GM23248 (cell line): ENCODE measurements at regions of chr10 and their contacts with region 1.

Region 1: GRCh38 chr10:95601116-95601719 is 40.0 kb upstream of the SORBS1 start:
- DNase-seq: peak; percentile 91
- H3K4me3 ChIP-seq: no peak overlapping the region
- H3K27ac ChIP-seq: no peak overlapping the region
- H3K4me1 ChIP-seq: no peaks in the 10 kb centered on the region
- H3K27me3 ChIP-seq: peaks cover 14% of the 10 kb centered on the region; the same call in 1 of the 2 replicates

Region 2: DNA sequence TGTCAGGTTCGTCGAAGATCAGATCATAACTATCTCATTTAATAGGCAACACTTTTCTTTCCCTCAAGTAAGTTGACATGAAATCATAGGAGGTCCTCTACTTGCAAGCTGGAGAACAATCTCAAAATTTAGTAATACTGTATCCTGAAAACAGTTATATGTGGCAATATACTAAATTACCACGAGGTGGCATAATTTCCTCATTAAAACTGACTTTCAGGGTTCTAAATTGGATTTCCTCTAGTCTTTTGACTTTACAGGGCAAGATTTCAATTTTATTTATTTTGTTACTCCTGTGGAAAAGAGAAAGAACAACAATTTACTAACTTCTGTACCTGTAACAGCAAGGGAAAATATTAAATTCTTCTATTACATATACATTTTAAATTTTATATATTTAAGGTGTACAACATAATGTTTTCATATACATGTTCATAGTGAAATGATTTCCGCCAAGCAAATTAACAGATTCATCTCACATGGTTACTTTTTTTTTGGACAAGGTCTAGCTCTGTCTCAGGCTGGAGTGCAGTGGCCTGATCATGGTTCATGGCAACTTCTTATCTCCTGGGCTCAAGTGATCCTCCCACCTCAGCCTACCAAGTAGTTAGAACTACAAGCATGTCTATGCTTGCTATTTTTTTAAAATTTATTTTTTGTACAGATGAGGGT is 971.1 kb before region 1 on chr10:
- in situ Hi-C with region 1: loop called (anchors 25 kb)
- DNase-seq: peak; percentile 42
- H3K4me3 ChIP-seq: no peak overlapping the region
- H3K27ac ChIP-seq: no peak overlapping the region
- H3K4me1 ChIP-seq: no peaks in the 10 kb centered on the region
- H3K27me3 ChIP-seq: no peaks in the 10 kb centered on the region

Region 3: DNA sequence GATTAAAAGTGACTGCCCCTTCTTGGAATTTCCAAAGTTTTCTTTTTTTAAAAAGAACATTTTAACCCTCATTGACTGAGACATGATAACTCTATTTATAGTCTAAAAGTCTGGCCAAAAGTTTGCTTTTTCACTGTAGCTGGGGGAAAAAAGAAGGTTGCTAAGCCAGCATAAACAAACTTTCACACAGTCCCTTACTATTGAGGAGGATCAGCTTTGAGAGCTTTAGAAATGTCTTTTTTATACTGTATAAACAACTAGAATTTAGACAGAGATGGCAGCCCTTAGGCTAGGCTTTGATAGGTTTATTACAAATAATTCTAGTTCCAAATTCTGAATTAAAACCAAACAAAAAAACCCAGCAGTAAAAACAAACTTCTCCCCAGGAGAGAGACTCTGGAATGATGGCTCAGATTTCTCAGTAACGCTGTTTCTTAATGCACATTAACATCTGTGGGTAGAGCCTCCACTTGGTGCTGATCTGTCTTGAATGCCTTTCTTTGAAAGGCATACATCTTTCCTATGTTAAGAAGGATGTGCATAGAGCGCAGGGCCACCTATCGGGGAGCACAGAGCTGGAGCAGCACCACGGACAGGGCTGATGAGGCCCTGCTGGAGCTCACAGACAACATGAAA is 209.5 kb before region 1 on chr10:
- in situ Hi-C with region 1: no loop called
- DNase-seq: peak; percentile 40
- H3K4me3 ChIP-seq: no peak overlapping the region
- H3K27ac ChIP-seq: no peak overlapping the region
- H3K4me1 ChIP-seq: no peaks in the 10 kb centered on the region
- H3K27me3 ChIP-seq: no peaks in the 10 kb centered on the region

Region 4: GRCh38 chr10:95430231-95430951 is 170.8 kb before region 1 on chr10:
- in situ Hi-C with region 1: loop called (anchors 5 kb)
- DNase-seq: peak; percentile 71
- H3K4me3 ChIP-seq: no peak overlapping the region
- H3K27ac ChIP-seq: no peak overlapping the region
- H3K4me1 ChIP-seq: no peaks in the 10 kb centered on the region
- H3K27me3 ChIP-seq: no peaks in the 10 kb centered on the region

Region 5: DNA sequence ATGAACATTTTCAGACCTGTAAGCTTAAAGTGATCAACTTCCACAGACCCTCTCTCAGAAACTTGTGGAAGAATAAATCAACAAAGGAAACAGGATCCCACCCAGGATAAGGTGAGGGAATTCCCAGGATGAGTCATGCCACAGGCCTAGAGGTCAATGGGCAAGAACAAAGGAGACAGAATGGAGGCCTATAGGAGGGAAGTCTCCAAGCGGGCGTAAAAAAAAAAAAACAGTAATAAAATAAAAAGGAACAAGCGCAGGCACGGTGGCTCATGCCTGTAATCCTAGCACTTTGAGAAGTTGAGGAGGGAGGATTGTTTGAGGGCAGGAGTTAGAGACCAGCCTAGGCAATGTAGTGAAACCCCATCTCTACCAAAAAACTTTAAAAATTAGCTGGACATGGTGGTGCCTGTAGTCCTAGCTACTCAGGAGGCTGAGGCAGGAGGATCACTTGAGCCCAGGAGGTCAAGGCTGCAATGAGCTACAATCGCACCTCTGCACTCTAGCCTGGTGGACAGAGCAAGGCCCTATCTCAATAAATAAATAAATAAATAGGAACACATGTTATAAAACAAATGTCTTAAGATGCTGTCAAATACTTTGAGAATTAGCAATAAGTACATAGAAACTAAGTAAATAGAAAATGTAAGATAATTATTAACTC is 48.4 kb before region 1 on chr10:
- in situ Hi-C with region 1: no loop called
- DNase-seq: no peak
- H3K4me3 ChIP-seq: no peak overlapping the region
- H3K27ac ChIP-seq: no peak overlapping the region
- H3K4me1 ChIP-seq: no peaks in the 10 kb centered on the region
- H3K27me3 ChIP-seq: no peaks in the 10 kb centered on the region

Region 6: DNA sequence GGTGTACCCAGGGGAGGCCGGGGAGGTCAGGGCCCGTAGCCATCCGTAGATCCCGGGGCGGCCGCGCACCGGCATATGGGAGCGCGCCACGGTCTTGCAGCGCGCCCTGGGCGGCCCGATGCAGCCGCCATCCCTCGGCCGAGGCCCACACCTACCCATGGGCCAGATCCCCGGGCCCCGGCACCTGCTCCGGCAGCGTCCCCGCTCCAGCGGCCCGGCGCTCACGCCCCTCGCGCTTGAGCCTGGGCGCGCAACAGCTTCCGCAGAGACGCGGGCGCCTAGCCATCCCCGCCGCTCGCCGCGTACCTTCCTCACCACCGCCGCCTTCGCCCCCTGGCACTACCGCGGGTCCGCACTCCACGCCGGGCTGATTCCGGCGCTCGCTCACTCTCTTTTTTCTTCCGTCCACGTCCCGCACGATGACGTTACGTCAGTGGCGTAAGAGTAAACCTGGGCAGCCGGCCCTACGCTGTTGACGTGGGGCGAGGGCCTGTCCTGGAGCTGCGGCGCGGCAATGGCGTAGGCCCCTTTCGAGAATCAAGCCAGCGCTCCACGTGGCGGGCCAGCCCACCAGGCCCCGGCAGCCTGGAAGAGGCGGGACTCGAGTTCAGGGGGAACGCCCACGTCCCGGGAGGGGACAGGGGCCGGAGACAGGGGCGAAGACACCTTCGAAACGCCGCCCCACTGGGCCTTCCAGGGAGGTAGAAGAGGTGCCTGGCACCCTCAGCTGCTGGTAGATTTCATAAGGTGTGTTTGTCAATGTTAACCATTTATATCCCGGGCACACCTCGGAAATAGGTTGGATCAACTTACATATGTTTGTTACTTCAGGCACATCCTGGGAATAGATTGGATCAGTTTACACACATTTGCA is 55.3 kb after region 1 on chr10 and contains the start of gene ALDH18A1:
- in situ Hi-C with region 1: no loop called
- DNase-seq: peak; percentile 96
- H3K4me3 ChIP-seq: peak within 1 kb of the TSS; percentile 95
- H3K27ac ChIP-seq: peak within 1 kb of the TSS; percentile 40
- H3K4me1 ChIP-seq: peaks cover 12% of the 10 kb centered on the region
- H3K27me3 ChIP-seq: no peaks in the 10 kb centered on the region
- total RNA-seq, gene ALDH18A1: 121 and 130 TPM in 2 replicates